Heart left ventricle (tissue), 16 donors: ENCODE measurements at regions of chr6 and their contacts with region 1.

Region 1: GRCh38 chr6:31293343-31293742 is 21.5 kb upstream of the HLA-C start:
- DNase-seq: no peak
- ATAC-seq: no peak
- H3K4me3 ChIP-seq: no peak overlapping the region
- H3K27ac ChIP-seq: no peak overlapping the region
- H3K4me1 ChIP-seq: no peaks in the 10 kb centered on the region
- H3K27me3 ChIP-seq: peaks cover 0 to 34% (median 7%) of the 10 kb centered on the region in 9 donors
- CTCF ChIP-seq: no peak
- POLR2A ChIP-seq: no peak

Region 2: DNA sequence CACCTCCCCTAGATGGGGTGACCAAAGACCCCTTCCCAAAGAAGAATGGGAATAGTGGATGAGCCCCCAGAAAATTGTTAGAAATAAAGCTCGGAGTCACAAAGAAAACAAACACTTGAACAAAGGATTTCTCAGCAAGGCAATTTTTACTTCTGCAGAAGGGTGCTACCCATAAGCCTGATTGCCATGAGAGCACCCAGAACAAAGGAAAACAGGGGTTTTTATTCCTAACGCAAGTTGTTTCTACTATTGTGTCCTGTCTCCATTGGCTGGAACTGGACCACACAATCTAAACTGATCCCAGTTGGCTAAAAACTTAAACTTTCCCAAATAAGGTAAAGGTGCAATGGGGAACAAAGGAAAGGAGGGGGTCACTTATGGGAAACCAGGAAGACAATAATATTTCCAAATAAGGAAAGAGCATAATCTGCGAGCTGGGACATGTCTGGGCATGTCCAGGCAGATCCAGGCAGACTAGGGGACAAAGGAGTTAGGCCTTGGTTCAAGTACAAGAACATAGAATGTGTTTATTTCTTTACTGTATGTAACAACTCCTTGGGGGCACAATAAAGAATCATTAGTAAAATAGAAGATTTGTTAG is 43.7 kb after region 1 on chr6:
- intact Hi-C with region 1: loop called in 1 of 10 experiments (anchors 5 kb)
- DNase-seq: no peak
- ATAC-seq: no peak
- H3K4me3 ChIP-seq: no peak overlapping the region
- H3K27ac ChIP-seq: no peak overlapping the region
- H3K4me1 ChIP-seq: no peaks in the 10 kb centered on the region
- H3K27me3 ChIP-seq: no peaks in the 10 kb centered on the region
- CTCF ChIP-seq: no peak
- POLR2A ChIP-seq: no peak

Region 3: GRCh38 chr6:31419842-31420241 is 126.5 kb after region 1 on chr6:
- intact Hi-C with region 1: no loop called
- DNase-seq: no peak
- ATAC-seq: no peak
- H3K4me3 ChIP-seq: no peak overlapping the region
- H3K27ac ChIP-seq: no peak overlapping the region
- H3K4me1 ChIP-seq: no peaks in the 10 kb centered on the region
- H3K27me3 ChIP-seq: no peaks in the 10 kb centered on the region
- CTCF ChIP-seq: no peak
- POLR2A ChIP-seq: no peak